Activated naive CD4-positive, alpha-beta T cell treated with anti-CD3 and anti-CD28 coated beads for 36 hours (primary cell): ENCODE measurements at regions of chr11 and their contacts with region 1.

Region 1: DNA sequence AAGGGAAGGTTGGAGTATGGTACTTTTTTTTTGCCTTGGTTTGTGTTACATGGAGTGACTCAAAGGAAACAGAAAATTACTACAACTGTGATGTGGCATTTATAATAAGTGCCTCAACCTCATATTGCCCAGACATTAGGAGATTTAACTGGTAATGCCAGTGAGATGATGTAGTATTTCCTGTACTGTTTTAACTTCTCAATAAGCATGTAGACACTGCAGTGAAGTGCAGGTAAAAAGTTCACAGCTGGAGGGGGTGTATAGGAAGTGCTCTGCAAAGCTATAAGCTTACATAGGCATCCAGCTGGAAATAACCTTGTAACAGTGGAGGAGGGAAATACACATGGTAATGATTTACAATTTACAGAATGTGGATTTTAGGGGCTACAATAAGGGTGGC is 138.2 kb upstream of the MTMR2 start:
- DNase-seq: peak; percentile 76
- H3K4me3 Mint-ChIP-seq: peak overlapping the region; percentile 13
- H3K27ac Mint-ChIP-seq: peak overlapping the region; percentile 94
- H3K4me1 Mint-ChIP-seq: peaks cover 78% of the 10 kb centered on the region
- H3K27me3 Mint-ChIP-seq: no peaks in the 10 kb centered on the region

Region 2: GRCh38 chr11:95877291-95877690 is 184.8 kb before region 1 on chr11:
- CTCF ChIA-PET with region 1: no interaction called
- intact Hi-C with region 1: loop called (anchors 5 kb)
- DNase-seq: peak; percentile 22
- H3K4me3 Mint-ChIP-seq: no peak overlapping the region
- H3K27ac Mint-ChIP-seq: peak overlapping the region; percentile 7
- H3K4me1 Mint-ChIP-seq: peaks cover 13% of the 10 kb centered on the region
- H3K27me3 Mint-ChIP-seq: no peaks in the 10 kb centered on the region

Region 3: DNA sequence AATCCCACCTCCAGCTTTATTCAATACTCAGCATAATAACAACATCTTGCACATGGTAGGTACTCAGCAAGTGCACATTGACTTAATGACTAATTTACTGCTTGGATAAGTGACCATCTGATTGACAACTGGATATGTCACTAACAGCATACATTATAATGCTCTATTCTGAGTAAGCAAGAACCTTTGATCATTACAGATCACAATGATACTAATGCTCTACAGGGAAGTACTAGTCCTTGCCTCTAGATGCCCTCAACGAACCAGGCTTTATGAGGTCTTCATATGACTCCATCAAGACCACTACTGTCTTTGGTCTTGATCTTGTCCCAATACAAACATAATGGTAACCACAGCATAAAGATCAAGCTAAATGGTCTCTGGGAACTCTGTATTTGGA is 29.3 kb after region 1 on chr11:
- CTCF ChIA-PET with region 1: interaction called, 4 read pairs
- intact Hi-C with region 1: loop called (anchors 1 kb)
- DNase-seq: peak; percentile 26
- H3K4me3 Mint-ChIP-seq: no peak overlapping the region
- H3K27ac Mint-ChIP-seq: no peak overlapping the region
- H3K4me1 Mint-ChIP-seq: peaks cover 56% of the 10 kb centered on the region
- H3K27me3 Mint-ChIP-seq: no peaks in the 10 kb centered on the region

Region 4: DNA sequence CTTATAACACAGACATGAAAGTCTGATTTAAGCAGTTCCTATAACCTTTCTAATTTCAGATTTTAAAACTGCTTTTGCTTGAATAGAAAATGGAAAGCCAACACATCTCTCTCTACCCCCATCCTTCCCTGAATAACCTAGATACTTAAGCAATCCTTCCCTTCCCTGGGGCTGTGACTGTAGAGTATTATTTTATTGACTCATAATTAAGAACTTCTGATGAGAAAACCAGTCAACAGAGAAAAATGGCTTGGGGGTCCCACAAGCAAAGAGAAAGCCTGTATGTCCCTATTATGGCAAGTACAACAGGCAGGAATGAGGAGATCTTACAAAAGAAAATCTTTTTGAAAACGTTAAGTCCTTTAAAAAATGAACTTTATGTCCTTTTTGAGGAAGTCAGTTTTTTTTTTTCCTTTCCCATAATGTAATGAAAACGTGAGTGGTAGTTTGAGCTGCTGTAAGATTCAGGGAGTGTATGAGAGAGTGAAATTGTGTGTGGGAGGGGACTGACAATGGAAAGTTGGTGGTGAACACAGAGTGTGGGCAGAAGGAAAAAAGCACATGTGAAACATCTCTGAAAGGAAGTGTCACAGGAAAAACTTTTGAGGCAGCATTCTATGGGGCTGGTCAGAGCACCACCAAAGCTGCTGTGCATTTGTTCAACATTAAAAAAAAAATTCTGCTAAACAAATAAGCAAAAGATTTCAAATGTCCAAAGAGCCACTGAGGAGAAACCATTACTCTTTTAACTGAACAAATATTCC is 126.3 kb after region 1 on chr11:
- CTCF ChIA-PET with region 1: interaction called, 5 read pairs
- intact Hi-C with region 1: loop called (anchors 1 kb)
- DNase-seq: peak; percentile 49
- H3K4me3 Mint-ChIP-seq: peak overlapping the region; percentile 38
- H3K27ac Mint-ChIP-seq: peak overlapping the region; percentile 92
- H3K4me1 Mint-ChIP-seq: peaks cover 90% of the 10 kb centered on the region
- H3K27me3 Mint-ChIP-seq: no peaks in the 10 kb centered on the region

Region 5: DNA sequence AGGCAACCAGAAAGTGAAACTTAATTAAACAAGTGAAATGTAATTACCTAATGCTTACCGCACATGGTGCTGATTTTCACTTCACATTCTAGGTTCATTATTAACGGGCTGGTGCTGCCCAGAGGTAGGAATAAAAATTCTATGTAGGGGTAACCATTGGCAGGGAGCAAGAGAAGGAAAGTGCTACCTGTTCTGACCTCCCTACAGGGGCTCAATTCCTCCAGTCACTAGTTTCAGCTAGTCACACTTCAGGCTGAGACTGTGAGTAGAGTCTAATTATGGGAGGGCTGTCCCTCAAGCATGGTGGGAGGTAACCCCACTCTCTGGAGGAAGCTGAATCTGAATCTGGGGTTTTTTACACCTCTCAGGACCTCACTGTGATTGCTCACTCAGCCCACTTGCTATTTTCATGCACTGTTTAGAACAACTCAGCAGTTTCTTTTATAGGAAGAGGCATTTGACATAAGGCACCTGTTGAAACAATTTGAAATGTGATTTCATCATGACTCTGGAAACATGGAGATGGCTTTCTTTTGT is 205.4 kb after region 1 on chr11:
- CTCF ChIA-PET with region 1: no interaction called
- intact Hi-C with region 1: loop called (anchors 1 kb)
- DNase-seq: peak; percentile 78
- H3K4me3 Mint-ChIP-seq: peak overlapping the region; percentile 29
- H3K27ac Mint-ChIP-seq: peak overlapping the region; percentile 89
- H3K4me1 Mint-ChIP-seq: peaks cover 96% of the 10 kb centered on the region
- H3K27me3 Mint-ChIP-seq: no peaks in the 10 kb centered on the region